Endothelial cell of umbilical vein (primary cell): ENCODE measurements at regions of chr10 and their contacts with region 1.

Region 1: DNA sequence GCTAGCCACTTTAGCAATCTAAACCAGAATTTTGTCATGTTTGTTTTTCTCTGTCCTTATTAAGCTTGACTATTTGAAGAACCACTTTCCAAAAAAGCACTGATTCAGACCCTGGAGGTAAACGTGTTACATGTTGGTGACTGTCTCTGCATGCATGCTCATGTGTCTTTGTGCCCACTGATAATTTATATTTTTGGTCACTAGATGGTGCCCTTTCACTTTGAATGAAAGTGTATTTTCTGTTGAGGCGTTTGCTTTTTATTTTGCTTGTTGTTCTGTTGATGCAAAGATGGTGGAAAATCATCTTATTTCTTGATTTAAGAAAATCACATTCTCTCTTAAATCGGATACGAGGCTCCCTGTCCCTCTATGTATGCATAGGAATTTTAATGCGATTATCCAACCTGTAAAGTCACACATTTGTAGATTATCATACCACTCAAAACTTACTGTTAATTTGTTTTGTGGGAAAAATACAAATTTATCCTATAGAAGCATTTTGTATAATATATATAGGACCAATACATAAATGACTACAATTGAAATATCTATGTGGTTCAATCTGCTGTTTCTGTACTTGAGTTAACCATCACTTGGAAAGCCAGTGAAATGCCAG is 269.3 kb downstream of the BICC1 start:
- DNase-seq: peak; percentile 32
- H3K4me3 ChIP-seq: no peak overlapping the region
- H3K27ac ChIP-seq: no peak overlapping the region
- H3K4me1 ChIP-seq: no peaks in the 10 kb centered on the region
- H3K27me3 ChIP-seq: no peaks in the 10 kb centered on the region
- CTCF ChIP-seq: peak; percentile 25 to 40
- POLR2A ChIP-seq: no peak

Region 2: DNA sequence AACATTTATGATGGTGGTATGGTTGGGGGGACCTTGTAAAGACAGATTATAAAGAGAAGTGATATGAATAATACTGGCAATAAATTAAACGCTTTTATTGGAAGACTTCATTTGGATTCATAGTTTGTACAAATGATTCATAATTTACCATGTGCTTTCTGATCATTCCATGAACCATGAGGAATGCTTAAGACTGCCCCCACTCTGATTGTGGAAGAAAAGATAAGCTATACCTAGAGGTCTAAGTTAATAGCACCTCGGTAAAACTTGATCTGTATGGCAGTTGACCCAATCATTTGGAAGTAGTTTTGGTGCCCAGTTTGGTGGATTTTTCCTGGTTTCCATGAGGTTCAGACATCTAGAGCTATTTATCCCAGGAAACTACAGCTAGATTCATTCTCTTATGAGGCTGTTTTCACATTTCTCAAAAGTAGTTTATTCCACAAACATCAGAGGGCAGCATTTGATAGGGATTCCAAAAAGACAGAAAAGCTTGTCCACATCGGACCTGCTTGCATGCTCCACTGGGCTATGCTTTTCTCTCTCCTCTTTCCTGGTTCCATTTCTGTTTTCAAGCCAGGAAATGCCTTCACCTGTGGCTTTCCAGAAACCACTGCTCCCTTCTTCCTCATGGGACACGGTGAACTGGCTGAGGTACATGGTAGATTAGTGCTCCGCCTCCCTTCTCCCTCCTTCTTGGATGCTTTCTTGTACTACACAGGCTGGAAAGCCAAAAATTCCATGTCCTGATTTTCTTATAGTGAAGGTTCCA is 367.5 kb before region 1 on chr10:
- CTCF ChIA-PET with region 1: no interaction called
- POLR2A ChIA-PET with region 1: no interaction called
- dilution Hi-C with region 1: no loop called
- intact Hi-C with region 1: no loop called
- DNase-seq: no peak
- H3K4me3 ChIP-seq: no peak overlapping the region
- H3K27ac ChIP-seq: no peak overlapping the region
- H3K4me1 ChIP-seq: no peaks in the 10 kb centered on the region
- H3K27me3 ChIP-seq: no peaks in the 10 kb centered on the region
- CTCF ChIP-seq: no peak
- POLR2A ChIP-seq: no peak

Region 3: GRCh38 chr10:58952747-58953466 is 170.9 kb after region 1 on chr10:
- CTCF ChIA-PET with region 1: no interaction called
- POLR2A ChIA-PET with region 1: no interaction called
- dilution Hi-C with region 1: no loop called
- intact Hi-C with region 1: loop called (anchors 1 kb)
- DNase-seq: peak; percentile 47
- H3K4me3 ChIP-seq: no peak overlapping the region
- H3K27ac ChIP-seq: no peak overlapping the region
- H3K4me1 ChIP-seq: no peaks in the 10 kb centered on the region
- H3K27me3 ChIP-seq: no peaks in the 10 kb centered on the region
- CTCF ChIP-seq: peak; percentile 42 to 64
- POLR2A ChIP-seq: no peak

Region 4: GRCh38 chr10:59240582-59241183 is 458.7 kb after region 1 on chr10:
- CTCF ChIA-PET with region 1: no interaction called
- POLR2A ChIA-PET with region 1: no interaction called
- dilution Hi-C with region 1: no loop called
- intact Hi-C with region 1: loop called (anchors 2 kb)
- DNase-seq: peak; percentile 52
- H3K4me3 ChIP-seq: no peak overlapping the region
- H3K27ac ChIP-seq: no peak overlapping the region
- H3K4me1 ChIP-seq: no peaks in the 10 kb centered on the region
- H3K27me3 ChIP-seq: no peaks in the 10 kb centered on the region
- CTCF ChIP-seq: peak; percentile 18 to 22
- POLR2A ChIP-seq: no peak

Region 5: GRCh38 chr10:59323036-59323459 is 541.1 kb after region 1 on chr10:
- CTCF ChIA-PET with region 1: no interaction called
- POLR2A ChIA-PET with region 1: no interaction called
- dilution Hi-C with region 1: no loop called
- intact Hi-C with region 1: no loop called
- DNase-seq: no peak
- H3K4me3 ChIP-seq: no peak overlapping the region
- H3K27ac ChIP-seq: no peak overlapping the region
- H3K4me1 ChIP-seq: no peaks in the 10 kb centered on the region
- H3K27me3 ChIP-seq: no peaks in the 10 kb centered on the region
- CTCF ChIP-seq: no peak
- POLR2A ChIP-seq: no peak

Region 6: DNA sequence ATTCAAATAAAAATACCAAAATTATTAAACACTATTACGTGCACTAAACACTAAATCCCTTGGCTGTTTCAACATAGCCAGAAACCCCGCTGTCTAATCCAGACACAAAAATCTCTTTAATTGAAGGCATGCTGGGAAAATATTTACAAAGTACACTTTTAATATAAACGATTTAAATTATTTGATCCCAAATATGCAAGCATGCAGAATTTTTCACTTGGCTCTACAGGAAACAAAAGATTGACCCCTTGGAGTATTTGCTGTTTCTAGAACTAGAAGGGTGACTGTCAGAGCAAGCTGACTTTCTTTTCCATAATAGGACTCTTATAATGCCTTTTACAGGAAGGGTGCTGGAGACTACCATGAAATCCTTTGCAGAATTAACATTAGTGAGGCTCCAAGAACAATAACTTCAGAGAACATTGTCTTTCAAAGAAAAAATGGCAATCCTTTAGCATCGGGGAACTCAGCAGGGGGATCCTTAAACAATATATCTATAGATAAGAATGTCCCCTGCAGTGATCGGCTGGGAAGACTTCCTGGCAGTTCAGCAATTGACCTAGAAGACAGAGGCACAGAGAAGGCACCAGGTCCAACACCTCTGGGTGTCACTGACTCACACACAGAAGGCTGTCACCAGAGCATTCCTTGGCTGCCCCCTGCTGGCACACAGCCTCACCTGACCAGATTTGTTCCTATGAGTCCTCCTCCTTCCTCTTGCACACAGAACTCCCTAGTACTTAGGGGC is 1027.1 kb after region 1 on chr10:
- CTCF ChIA-PET with region 1: no interaction called
- POLR2A ChIA-PET with region 1: no interaction called
- dilution Hi-C with region 1: no loop called
- intact Hi-C with region 1: loop called (anchors 2 kb)
- DNase-seq: peak; percentile 71
- H3K4me3 ChIP-seq: no peak overlapping the region
- H3K27ac ChIP-seq: no peak overlapping the region
- H3K4me1 ChIP-seq: no peaks in the 10 kb centered on the region
- H3K27me3 ChIP-seq: no peaks in the 10 kb centered on the region
- CTCF ChIP-seq: peak; percentile 70 to 82
- POLR2A ChIP-seq: no peak